CD8-positive, alpha-beta T cell (primary cell): ENCODE measurements at regions of chr10 and their contacts with region 1.

Region 1: GRCh38 chr10:97686962-97687784 is at the start of gene AVPI1:
- DNase-seq: peak; percentile 90 to 98 (median 96)
- ATAC-seq: peak; percentile 94
- H3K4me3 ChIP-seq: peak within 1 kb of the TSS; percentile 77 to 82
- H3K4me3 Mint-ChIP-seq: peak within 1 kb of the TSS; percentile 89
- H3K27ac ChIP-seq: peak within 1 kb of the TSS; percentile 47 to 64
- H3K27ac Mint-ChIP-seq: peak within 1 kb of the TSS; percentile 86
- H3K4me1 ChIP-seq: peaks cover 22% of the 10 kb centered on the region
- H3K4me1 Mint-ChIP-seq: peaks cover 23% of the 10 kb centered on the region
- H3K27me3 ChIP-seq: no peaks in the 10 kb centered on the region
- H3K27me3 Mint-ChIP-seq: peaks cover 4% of the 10 kb centered on the region
- CTCF ChIP-seq: no peak
- total RNA-seq, gene AVPI1: 13.7 TPM

Region 2: DNA sequence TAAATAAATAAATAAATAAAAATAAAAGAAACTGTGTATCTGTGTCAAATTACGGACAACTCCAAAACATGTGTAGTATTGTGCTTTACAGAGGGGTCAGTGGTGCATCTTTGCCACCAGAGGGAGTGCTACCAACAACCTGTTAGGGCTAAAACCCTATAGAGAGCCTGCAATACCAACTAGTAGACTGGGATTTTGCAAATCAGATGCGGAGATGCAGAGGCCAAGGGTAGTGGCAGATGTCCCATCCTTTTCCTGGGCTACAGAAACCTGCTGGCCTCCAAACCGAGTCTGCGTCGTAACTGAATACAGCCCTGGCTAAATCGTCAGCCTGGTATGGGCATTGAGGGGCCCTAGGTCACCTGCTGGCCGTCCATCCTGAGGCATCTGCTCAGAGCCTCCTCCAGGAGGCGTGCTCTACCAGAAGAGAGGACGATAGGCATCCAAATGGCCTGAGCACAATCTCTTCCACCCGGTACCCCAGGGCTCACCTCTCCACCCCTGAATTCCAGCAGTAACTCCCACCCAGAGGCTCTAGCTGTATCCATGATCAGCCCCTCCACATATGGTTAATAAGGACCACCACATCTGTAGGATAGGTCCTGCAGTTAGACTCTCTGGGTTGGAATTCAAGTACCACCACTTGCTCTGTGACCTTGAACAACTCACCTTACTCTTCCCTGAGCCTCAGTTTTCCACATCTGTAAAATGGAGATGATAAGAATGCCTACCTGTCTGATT is 279.8 kb before region 1 on chr10:
- CTCF ChIA-PET with region 1: no interaction called
- POLR2A ChIA-PET with region 1: no interaction called
- intact Hi-C with region 1: no loop called
- DNase-seq: peak in 8 of 9 experiments; percentile 41 to 87 (median 66)
- ATAC-seq: peak; percentile 99
- H3K4me3 ChIP-seq: peak overlapping the region in 1 of 2 experiments; percentile 27
- H3K4me3 Mint-ChIP-seq: peak overlapping the region; percentile 45
- H3K27ac ChIP-seq: peak overlapping the region in 1 of 2 experiments; percentile 51
- H3K27ac Mint-ChIP-seq: peak overlapping the region; percentile 37
- H3K4me1 ChIP-seq: peaks cover 5% of the 10 kb centered on the region
- H3K4me1 Mint-ChIP-seq: peaks cover 11% of the 10 kb centered on the region
- H3K27me3 ChIP-seq: no peaks in the 10 kb centered on the region
- H3K27me3 Mint-ChIP-seq: no peaks in the 10 kb centered on the region
- CTCF ChIP-seq: peak; percentile 86

Region 3: DNA sequence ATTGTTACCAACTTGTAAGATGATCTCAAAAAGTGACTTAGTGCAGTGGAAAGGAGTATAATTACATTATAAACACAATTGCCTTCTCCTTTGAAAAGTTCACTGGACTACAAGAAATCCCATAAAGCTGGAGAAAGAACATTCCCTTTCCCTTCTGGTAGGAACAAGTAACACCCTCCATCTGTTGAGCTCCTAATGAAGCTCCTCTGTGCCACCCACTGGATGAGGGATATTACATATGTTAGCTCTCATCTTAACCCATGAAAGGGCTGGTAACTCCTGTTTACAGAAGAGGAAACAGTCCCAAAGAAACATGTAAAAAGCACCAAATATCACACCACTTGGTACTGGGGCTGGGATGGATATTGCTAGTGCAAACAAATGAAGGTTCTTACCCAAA is 253.1 kb before region 1 on chr10:
- CTCF ChIA-PET with region 1: no interaction called
- POLR2A ChIA-PET with region 1: no interaction called
- intact Hi-C with region 1: no loop called
- DNase-seq: no peak
- ATAC-seq: no peak
- H3K4me3 ChIP-seq: no peak overlapping the region
- H3K4me3 Mint-ChIP-seq: no peak overlapping the region
- H3K27ac ChIP-seq: no peak overlapping the region
- H3K27ac Mint-ChIP-seq: peak overlapping the region; percentile 37
- H3K4me1 ChIP-seq: no peaks in the 10 kb centered on the region
- H3K4me1 Mint-ChIP-seq: peaks cover 4% of the 10 kb centered on the region
- H3K27me3 ChIP-seq: no peaks in the 10 kb centered on the region
- H3K27me3 Mint-ChIP-seq: no peaks in the 10 kb centered on the region
- CTCF ChIP-seq: no peak

Region 4: DNA sequence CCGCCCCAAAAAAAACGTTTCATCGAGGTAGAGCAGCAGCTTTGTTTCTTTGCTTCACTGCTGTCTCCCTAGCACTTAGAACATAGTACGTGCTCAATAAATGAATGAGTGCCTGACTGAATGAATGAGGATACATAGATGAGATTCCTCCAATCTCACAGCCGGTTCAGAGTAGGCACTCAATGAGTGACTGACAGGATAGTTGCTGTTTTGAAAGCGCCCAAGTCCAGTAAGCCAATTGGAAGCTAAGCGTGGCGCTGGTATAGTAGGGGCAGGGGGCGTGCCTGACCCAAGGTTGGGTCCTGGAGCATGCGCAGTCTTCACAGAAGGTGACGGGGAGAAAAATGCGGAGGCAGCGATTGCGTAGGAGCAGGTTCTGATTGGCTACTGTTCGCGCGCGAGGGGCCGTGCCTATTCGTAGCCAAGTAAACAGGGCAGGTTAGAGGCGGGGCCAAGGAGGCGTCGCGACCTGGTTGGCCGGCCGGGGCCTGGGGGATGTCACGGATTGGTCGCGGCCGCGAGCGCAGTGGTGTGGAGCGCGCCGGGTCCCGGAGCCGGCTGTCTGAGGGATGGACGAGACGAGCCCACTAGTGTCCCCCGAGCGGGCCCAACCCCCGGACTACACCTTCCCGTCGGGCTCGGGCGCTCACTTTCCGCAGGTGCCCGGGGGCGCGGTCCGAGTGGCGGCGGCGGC is 46.9 kb before region 1 on chr10 and contains the start of gene PI4K2A:
- CTCF ChIA-PET with region 1: interaction called, 3 read pairs
- POLR2A ChIA-PET with region 1: interaction called, 14 read pairs
- intact Hi-C with region 1: loop called (anchors 1 kb)
- DNase-seq: peak; percentile 97 to 100 (median 98)
- ATAC-seq: peak; percentile 97
- H3K4me3 ChIP-seq: peak within 1 kb of the TSS; percentile 58 to 84
- H3K4me3 Mint-ChIP-seq: peak within 1 kb of the TSS; percentile 95
- H3K27ac ChIP-seq: peak within 1 kb of the TSS; percentile 54 to 55
- H3K27ac Mint-ChIP-seq: peak within 1 kb of the TSS; percentile 90
- H3K4me1 ChIP-seq: peaks cover 10% of the 10 kb centered on the region
- H3K4me1 Mint-ChIP-seq: peaks cover 24% of the 10 kb centered on the region
- H3K27me3 ChIP-seq: no peaks in the 10 kb centered on the region
- H3K27me3 Mint-ChIP-seq: no peaks in the 10 kb centered on the region
- CTCF ChIP-seq: no peak
- total RNA-seq, gene PI4K2A: 37.6 to 37.7 TPM

Region 5: DNA sequence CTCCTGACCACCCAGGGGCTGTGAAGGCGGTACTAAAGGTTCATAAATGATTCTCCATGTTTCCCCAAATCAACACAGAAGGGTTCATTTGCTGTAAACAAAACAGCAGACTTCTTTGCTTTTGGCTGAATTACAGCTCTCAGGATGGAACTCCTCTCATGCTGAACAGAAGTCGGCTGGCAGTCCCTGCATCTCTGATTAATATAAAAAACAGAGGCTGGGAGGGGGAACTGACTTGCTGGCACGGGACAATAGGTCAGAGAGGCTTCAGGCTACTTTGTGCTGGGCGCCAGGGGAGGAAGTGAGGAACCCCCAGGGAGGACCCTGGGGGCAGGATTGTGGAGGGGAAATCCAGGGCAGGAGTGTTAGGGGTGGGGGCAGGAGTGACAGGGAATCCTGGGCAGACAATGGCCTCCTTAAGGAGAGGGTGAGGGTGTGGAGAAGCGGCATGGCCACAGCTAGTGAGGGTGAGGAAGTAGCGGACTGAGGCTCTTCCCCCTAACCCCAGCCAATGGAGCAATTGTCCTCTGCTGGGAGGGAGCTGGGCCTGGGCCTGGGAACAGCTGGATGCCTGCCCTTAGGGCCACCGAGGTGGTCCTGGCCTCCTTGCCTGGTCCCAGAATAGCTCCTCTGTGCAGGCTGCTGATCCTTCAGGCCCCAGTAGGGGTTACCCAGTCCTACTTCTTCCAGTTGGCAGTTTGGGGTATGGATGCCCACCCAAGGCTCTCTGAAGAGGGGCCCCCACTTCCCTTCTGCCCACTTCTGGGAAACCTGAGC is 93.9 kb after region 1 on chr10:
- CTCF ChIA-PET with region 1: no interaction called
- POLR2A ChIA-PET with region 1: no interaction called
- intact Hi-C with region 1: no loop called
- DNase-seq: peak in 1 of 9 experiments; percentile 18
- ATAC-seq: no peak
- H3K4me3 ChIP-seq: peak overlapping the region in 1 of 2 experiments; percentile 36
- H3K4me3 Mint-ChIP-seq: peak overlapping the region; percentile 32
- H3K27ac ChIP-seq: peak overlapping the region; percentile 54 to 73
- H3K27ac Mint-ChIP-seq: peak overlapping the region; percentile 93
- H3K4me1 ChIP-seq: peaks cover 42% of the 10 kb centered on the region
- H3K4me1 Mint-ChIP-seq: peaks cover 43% of the 10 kb centered on the region
- H3K27me3 ChIP-seq: no peaks in the 10 kb centered on the region
- H3K27me3 Mint-ChIP-seq: no peaks in the 10 kb centered on the region
- CTCF ChIP-seq: no peak

Region 6: DNA sequence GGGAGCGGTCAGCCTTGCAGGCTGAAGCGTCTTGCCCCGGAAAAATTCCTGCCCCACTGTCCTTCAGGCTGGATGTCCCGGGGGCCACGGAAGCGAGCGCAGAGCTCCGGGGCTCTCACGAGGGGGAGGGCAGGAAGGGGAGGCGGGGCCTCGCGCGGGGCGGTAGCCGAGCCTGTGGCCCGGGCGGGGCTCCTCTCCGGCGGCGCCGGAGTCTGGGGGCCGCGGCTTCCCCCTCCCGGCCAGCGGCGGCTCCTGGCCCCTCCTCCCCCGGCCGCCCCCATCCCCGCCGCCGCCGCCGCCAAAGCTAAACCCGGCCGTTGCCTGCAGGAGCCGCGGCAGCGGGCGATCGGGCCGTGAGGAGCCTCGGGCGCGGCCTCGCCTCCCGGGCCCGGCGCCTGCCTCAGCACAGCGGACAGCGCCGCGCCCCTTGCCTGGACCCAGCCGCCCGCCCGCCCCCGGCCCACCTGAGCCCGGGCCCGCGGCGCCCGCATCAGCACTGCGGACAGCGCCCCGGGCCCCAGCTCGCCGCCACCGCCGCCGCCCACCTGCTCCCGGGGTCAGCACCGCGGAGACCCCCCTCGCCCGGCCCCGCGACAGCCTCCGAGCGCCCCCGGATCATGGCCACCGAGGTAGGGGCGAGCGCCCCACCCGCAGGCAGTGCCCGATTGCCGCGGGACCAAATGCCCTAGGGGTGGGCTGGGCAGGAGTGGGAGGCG is 162.7 kb after region 1 on chr10 and contains the start of gene GOLGA7B:
- CTCF ChIA-PET with region 1: no interaction called
- POLR2A ChIA-PET with region 1: interaction called, 3 read pairs
- intact Hi-C with region 1: loop called (anchors 1 to 5 kb)
- DNase-seq: peak; percentile 23 to 80 (median 69)
- ATAC-seq: peak; percentile 84
- H3K4me3 ChIP-seq: peak within 1 kb of the TSS; percentile 70 to 87
- H3K4me3 Mint-ChIP-seq: peak within 1 kb of the TSS; percentile 84
- H3K27ac ChIP-seq: peak within 1 kb of the TSS in 1 of 2 experiments; percentile 22
- H3K27ac Mint-ChIP-seq: peak within 1 kb of the TSS; percentile 84
- H3K4me1 ChIP-seq: peaks cover 31% of the 10 kb centered on the region
- H3K4me1 Mint-ChIP-seq: peaks cover 39% of the 10 kb centered on the region
- H3K27me3 ChIP-seq: no peaks in the 10 kb centered on the region
- H3K27me3 Mint-ChIP-seq: no peaks in the 10 kb centered on the region
- CTCF ChIP-seq: no peak
- total RNA-seq, gene GOLGA7B: 3.5 to 5.1 TPM